ENCODE measurements at regions of chr11 and their contacts with region 1.

Region 1: GRCh38 chr11:1889224-1890120 is 2.2 kb downstream of the PRR33 start:
- DNase-seq: peak; percentile 87
- ATAC-seq: peak; percentile 78
- H3K4me3 Mint-ChIP-seq: peak overlapping the region; percentile 73
- H3K27ac Mint-ChIP-seq: peak overlapping the region; percentile 86
- H3K4me1 Mint-ChIP-seq: peaks cover 17% of the 10 kb centered on the region
- H3K27me3 Mint-ChIP-seq: no peaks in the 10 kb centered on the region

Region 2: GRCh38 chr11:1592628-1593027 is 296.8 kb before region 1 on chr11:
- CTCF ChIA-PET with region 1: no interaction called
- POLR2A ChIA-PET with region 1: no interaction called
- intact Hi-C with region 1: no loop called
- DNase-seq: no peak
- ATAC-seq: no peak
- H3K4me3 Mint-ChIP-seq: no peak overlapping the region
- H3K27ac Mint-ChIP-seq: no peak overlapping the region
- H3K4me1 Mint-ChIP-seq: peaks cover 11% of the 10 kb centered on the region
- H3K27me3 Mint-ChIP-seq: peaks cover 18% of the 10 kb centered on the region

Region 3: DNA sequence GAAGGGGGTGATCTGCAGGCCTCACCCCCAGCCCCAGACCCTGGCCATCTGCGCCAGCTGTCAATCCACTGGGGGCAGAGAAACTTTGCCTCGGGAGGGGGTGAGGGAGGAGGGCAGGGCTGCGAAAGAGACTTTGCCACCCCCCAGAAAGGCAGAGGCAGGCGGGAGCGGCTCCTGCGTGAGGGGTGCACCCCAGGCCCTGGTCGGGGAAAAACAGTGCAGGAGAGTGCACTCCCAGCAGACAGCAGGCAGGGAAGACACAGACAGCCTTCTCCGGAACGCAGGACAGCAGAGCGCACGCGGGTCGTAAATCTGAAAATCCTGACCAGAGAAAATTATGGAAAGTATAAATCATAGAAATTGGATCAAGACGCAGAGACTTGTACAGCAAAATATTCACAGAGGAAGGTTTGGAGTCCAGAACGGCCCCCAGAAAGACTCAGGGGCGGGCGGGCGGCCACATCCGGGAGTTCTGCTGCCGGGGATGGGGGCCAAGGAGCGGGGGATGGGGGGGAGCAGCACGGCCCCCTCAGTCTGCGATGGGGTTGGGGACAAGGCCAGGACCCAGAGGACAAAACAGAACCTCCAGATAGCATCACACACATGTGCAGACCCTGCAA is 49.6 kb after region 1 on chr11:
- CTCF ChIA-PET with region 1: no interaction called
- POLR2A ChIA-PET with region 1: no interaction called
- intact Hi-C with region 1: loop called (anchors 1 kb)
- DNase-seq: peak; percentile 12
- ATAC-seq: no peak
- H3K4me3 Mint-ChIP-seq: no peak overlapping the region
- H3K27ac Mint-ChIP-seq: no peak overlapping the region
- H3K4me1 Mint-ChIP-seq: peaks cover 9% of the 10 kb centered on the region
- H3K27me3 Mint-ChIP-seq: no peaks in the 10 kb centered on the region

Region 4: GRCh38 chr11:1953489-1954266 is 64.2 kb after region 1 on chr11:
- CTCF ChIA-PET with region 1: no interaction called
- POLR2A ChIA-PET with region 1: no interaction called
- intact Hi-C with region 1: no loop called
- DNase-seq: peak; percentile 12
- ATAC-seq: peak; percentile 64
- H3K4me3 Mint-ChIP-seq: no peak overlapping the region
- H3K27ac Mint-ChIP-seq: no peak overlapping the region
- H3K4me1 Mint-ChIP-seq: no peaks in the 10 kb centered on the region
- H3K27me3 Mint-ChIP-seq: no peaks in the 10 kb centered on the region

Region 5: DNA sequence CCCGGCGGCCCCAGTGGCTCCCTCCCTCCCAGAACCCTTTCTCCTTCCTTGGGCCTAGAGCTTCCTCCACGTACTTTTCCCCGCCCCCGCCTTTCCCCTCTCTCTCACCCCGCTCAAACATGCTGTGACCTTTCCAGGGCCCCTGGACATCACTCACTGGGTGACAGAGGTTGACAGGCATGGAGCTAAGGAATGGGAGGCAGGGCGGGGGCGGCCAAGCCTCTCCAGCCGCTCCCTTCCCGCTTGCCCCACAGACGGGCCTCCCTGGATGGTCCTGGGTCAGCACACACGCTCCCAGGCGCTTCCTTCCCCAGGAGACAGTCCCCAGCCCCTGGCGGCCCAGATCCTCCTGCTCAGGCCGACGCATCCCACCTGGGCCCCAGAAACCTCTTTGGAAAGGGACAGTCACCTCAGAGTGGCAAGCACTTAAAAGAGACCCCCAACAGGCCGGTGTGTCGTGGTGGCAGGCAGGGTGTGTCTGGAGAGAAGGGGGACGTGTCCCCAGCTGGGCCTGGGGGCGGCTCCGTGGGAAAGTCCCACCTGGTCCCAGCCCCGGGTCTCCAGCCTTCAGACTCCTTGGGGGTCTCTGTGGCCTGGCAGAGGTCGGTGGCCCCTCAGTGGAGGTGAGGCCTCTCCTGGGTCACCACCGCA is 99.3 kb after region 1 on chr11:
- CTCF ChIA-PET with region 1: no interaction called
- POLR2A ChIA-PET with region 1: no interaction called
- intact Hi-C with region 1: no loop called
- DNase-seq: no peak
- ATAC-seq: no peak
- H3K4me3 Mint-ChIP-seq: no peak overlapping the region
- H3K27ac Mint-ChIP-seq: no peak overlapping the region
- H3K4me1 Mint-ChIP-seq: no peaks in the 10 kb centered on the region
- H3K27me3 Mint-ChIP-seq: no peaks in the 10 kb centered on the region